ENCODE measurements at regions of chr17 and their contacts with region 1.

Region 1: DNA sequence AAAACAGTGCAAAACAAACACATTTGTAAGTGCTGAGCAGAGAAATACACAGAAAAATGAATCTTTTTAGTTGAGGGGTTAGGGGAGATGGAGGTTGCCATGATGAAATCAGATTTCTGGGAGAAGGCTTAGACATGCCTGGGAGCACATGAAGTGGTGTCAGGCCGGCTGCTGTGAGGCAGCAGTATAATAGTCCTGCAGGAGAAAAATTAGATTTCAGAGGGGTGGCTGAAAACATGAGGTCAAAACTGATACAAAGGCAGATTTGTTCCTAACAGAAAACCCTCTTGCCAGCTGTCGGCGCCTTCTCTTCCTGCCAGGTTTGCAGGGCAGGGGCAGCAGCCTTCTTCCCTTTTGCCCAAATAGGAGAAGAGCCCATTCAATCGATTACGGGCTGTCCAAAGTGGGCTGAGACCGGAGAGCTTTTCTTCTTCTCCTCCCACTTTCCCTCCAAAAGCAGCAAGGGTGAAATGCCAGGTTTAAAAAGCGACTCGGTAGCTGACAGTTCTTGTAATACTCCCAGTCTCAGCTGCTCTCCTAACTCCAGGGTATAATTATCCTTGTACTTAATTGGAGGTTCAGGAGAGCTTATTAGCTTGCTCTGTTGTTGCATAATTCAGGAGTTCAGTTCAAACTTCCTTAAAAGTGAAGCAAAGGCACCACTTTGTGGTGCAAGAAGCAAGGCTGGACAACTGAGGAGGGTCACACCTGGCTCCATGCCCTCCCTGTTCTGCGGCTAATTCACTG is 80.0 kb downstream of the PCTP start:
- DNase-seq: no peak

Region 2: DNA sequence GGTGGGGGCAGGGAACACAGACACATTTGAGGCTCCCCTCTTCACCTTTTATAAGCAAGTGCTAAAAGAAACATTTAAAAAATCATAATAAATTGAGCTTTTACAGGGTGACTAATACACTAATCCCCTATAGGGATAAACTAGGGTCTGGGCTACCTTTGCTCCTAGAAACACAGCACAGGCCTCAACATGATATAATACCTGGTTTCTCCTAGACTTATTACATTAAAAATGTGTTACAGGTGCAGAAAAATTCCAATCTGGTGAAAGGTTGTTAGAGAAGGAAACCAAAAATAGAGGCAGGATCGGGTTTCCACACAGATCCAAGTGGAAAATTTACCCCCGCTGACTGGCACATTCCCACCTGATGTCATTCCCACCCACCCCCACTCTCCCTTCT is 638.0 kb after region 1 on chr17:
- intact Hi-C with region 1: loop called in 1 of 2 experiments (anchors 5 kb)
- DNase-seq: no peak